Activated T-helper 2 cell treated with anti-CD3 and anti-CD28 coated beads, Interferon-gamma antibody, Interleukin-2, Interleukin-4, amounts not matched to agents 10 μg/mL and 5 μg/mL and 100 μg/mL, durations not matched to agents 14 hours and 24 hours and 36 hours (primary cell): ENCODE measurements at regions of chr11 and their contacts with region 1.

Region 1: GRCh38 chr11:10307442-10308207 is 2.8 kb downstream of the ADM start:
- DNase-seq: peak; percentile 70
- H3K4me3 Mint-ChIP-seq: peak overlapping the region; percentile 69
- H3K27ac Mint-ChIP-seq: peak overlapping the region; percentile 69
- H3K4me1 Mint-ChIP-seq: peaks cover 50% of the 10 kb centered on the region
- H3K27me3 Mint-ChIP-seq: peaks cover 61% of the 10 kb centered on the region

Region 2: GRCh38 chr11:9613118-9613829 is 694.4 kb before region 1 on chr11:
- intact Hi-C with region 1: loop called (anchors 5 kb)
- DNase-seq: peak; percentile 81
- H3K4me3 Mint-ChIP-seq: peak overlapping the region; percentile 72
- H3K27ac Mint-ChIP-seq: peak overlapping the region; percentile 98
- H3K4me1 Mint-ChIP-seq: peaks cover 42% of the 10 kb centered on the region
- H3K27me3 Mint-ChIP-seq: no peaks in the 10 kb centered on the region

Region 3: GRCh38 chr11:9840460-9841004 is 467.1 kb before region 1 on chr11:
- intact Hi-C with region 1: loop called (anchors 5 kb)
- DNase-seq: no peak
- H3K4me3 Mint-ChIP-seq: no peak overlapping the region
- H3K27ac Mint-ChIP-seq: peak overlapping the region; percentile 3
- H3K4me1 Mint-ChIP-seq: peaks cover 38% of the 10 kb centered on the region
- H3K27me3 Mint-ChIP-seq: no peaks in the 10 kb centered on the region

Region 4: DNA sequence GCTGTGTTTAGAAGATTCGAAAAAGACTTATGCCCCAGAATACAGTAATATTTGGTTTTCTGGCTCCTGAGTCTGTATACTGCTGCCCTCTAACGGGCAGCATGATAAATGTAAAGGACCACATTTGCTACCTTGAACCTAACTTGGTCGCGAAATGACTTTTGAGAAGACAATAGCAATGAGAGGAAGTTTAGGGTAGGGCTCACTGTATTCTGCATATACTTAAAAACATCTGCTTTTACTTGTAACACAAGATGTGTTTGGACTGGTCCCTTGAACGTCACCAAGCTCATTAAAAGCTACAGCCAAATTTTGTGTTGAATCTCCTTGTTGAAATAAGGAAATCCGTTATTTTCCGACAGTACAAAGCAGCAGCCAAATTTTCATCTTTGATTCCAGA is 334.6 kb before region 1 on chr11:
- intact Hi-C with region 1: loop called (anchors 5 kb)
- DNase-seq: no peak
- H3K4me3 Mint-ChIP-seq: no peak overlapping the region
- H3K27ac Mint-ChIP-seq: no peak overlapping the region
- H3K4me1 Mint-ChIP-seq: peaks cover 2% of the 10 kb centered on the region
- H3K27me3 Mint-ChIP-seq: no peaks in the 10 kb centered on the region

Region 5: DNA sequence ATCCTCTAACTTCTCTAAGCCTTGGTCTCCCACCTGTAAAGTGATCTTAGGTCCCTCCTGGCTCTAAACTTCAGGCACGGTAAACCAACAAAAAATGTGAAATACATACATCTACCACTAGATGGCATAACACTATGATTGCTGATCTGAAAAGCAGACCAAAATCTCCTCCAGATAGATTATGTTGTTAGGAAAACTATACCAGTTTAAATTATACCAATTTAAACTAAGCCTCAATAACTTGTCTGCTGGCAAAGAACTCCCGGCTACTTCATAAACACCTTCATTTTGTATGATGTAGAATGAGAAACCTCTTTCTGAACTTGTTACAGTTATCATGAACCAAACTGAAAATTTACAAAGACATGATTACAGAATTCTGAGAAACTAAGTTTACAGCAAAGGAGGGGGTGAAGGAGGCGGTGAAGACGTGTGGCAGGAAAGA is 99.5 kb before region 1 on chr11:
- intact Hi-C with region 1: loop called (anchors 1 kb)
- DNase-seq: no peak
- H3K4me3 Mint-ChIP-seq: no peak overlapping the region
- H3K27ac Mint-ChIP-seq: no peak overlapping the region
- H3K4me1 Mint-ChIP-seq: no peaks in the 10 kb centered on the region
- H3K27me3 Mint-ChIP-seq: peaks cover 21% of the 10 kb centered on the region

Region 6: DNA sequence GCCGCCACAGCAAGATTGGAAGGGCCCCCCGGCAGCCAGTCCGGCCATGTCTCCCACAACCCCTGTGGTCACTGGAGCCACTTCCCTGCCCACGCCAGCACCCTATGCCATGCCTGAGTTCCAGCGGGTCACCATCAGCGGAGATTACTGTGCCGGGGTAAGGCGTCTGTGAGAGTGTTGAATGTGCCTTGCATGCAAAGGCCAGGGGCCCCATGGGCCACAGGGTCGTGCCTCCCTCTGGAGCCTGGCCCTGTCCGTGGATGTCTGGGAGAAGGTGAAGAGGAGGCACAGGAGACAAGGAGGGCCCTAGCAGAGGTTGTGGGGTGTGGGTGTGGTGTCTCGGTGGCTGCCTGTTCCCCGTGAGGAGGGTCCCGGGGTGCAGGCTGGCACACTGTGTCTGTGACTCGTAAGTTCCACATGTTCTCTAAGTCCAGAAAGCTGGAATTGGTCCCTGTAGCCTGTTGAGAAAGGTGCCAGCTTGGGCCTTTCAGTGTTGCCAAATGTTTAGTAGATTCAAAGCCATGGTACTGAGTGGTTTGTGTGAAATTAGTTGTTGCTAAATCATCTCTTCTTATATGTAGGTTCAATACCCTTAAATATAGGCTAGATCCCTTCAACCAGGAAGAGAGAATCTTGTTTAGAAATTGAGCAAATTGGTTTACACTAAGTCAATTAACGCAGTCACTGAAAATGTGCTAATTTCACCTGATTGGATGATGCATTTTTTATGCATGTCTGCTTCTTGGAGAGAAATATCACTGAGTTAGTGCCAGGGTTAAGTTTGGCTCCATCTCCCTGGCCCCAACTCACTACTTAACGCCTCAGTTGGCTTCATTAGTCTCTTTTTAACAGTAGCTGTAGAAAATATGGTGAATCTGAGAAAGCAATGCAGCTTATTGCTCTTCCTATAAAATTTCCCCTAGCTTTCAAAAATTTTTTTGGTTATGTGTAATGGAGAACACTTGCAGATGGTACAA is 171.2 kb after region 1 on chr11:
- intact Hi-C with region 1: no loop called
- DNase-seq: no peak
- H3K4me3 Mint-ChIP-seq: no peak overlapping the region
- H3K27ac Mint-ChIP-seq: no peak overlapping the region
- H3K4me1 Mint-ChIP-seq: peaks cover 5% of the 10 kb centered on the region
- H3K27me3 Mint-ChIP-seq: no peaks in the 10 kb centered on the region

Region 7: DNA sequence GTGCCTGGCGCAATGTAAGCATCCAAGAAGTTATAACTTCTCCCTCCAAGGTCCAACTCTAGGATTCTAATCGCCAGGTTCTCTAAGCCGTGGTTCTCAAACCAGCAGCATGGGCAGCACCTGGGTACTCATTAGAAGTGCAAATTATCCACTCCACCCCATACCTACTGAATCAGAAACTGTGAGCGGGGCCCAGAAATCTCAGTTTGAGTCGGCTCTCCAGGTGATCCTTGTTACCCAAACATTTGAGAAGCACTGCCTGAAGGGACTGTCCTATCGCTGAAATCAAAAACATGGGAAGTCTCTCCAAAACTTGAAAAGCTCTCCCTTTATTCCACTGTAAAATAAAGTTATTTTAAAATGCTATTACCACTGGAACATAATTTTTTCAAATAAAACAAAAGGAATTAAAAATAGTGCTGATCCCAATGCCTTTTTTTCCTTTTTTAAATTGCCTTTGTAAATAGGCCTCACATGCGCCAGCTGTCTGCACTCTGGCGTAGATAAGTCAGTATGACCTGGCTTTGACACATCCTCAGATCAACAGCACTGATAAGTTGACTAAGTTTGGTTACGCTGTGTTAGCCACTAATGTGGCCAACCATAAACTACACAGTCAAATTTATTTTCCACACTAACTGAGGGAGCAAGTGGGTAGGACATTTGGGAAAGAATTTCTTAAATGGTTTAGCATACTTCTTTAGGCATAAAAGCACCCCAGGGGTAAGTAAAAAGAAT is 435.0 kb after region 1 on chr11:
- intact Hi-C with region 1: loop called (anchors 10 kb)
- DNase-seq: no peak
- H3K4me3 Mint-ChIP-seq: peak overlapping the region; percentile 3
- H3K27ac Mint-ChIP-seq: peak overlapping the region; percentile 0
- H3K4me1 Mint-ChIP-seq: peaks cover 32% of the 10 kb centered on the region
- H3K27me3 Mint-ChIP-seq: no peaks in the 10 kb centered on the region